Activated CD4-positive, alpha-beta memory T cell treated with anti-CD3 and anti-CD28 coated beads for 36 hours (primary cell): ENCODE measurements at regions of chr2 and their contacts with region 1.

Region 1: GRCh38 chr2:70086838-70087701 is at the start of gene PCBP1:
- DNase-seq: peak; percentile 96
- H3K4me3 Mint-ChIP-seq: peak within 1 kb of the TSS; percentile 97
- H3K27ac Mint-ChIP-seq: peak within 1 kb of the TSS; percentile 100
- H3K4me1 Mint-ChIP-seq: peaks cover 49% of the 10 kb centered on the region
- H3K27me3 Mint-ChIP-seq: peaks cover 3% of the 10 kb centered on the region
- total RNA-seq, gene PCBP1: 444 to 449 TPM

Region 2: GRCh38 chr2:69386789-69387734 is 700.0 kb before region 1 on chr2 and contains the start of gene GFPT1:
- CTCF ChIA-PET with region 1: no interaction called
- POLR2A ChIA-PET with region 1: no interaction called
- intact Hi-C with region 1: loop called (anchors 10 kb)
- DNase-seq: peak; percentile 95
- H3K4me3 Mint-ChIP-seq: peak within 1 kb of the TSS; percentile 85
- H3K27ac Mint-ChIP-seq: peak within 1 kb of the TSS; percentile 80
- H3K4me1 Mint-ChIP-seq: peaks cover 39% of the 10 kb centered on the region
- H3K27me3 Mint-ChIP-seq: no peaks in the 10 kb centered on the region
- total RNA-seq, gene GFPT1: 39.8 to 43.6 TPM

Region 3: GRCh38 chr2:70104231-70105111 is 17.4 kb after region 1 on chr2:
- CTCF ChIA-PET with region 1: interaction called, 4 read pairs
- POLR2A ChIA-PET with region 1: interaction called, 24 read pairs
- intact Hi-C with region 1: loop called (anchors 1 kb)
- DNase-seq: peak; percentile 71
- H3K4me3 Mint-ChIP-seq: peak overlapping the region; percentile 70
- H3K27ac Mint-ChIP-seq: peak overlapping the region; percentile 95
- H3K4me1 Mint-ChIP-seq: peaks cover 52% of the 10 kb centered on the region
- H3K27me3 Mint-ChIP-seq: no peaks in the 10 kb centered on the region

Region 4: DNA sequence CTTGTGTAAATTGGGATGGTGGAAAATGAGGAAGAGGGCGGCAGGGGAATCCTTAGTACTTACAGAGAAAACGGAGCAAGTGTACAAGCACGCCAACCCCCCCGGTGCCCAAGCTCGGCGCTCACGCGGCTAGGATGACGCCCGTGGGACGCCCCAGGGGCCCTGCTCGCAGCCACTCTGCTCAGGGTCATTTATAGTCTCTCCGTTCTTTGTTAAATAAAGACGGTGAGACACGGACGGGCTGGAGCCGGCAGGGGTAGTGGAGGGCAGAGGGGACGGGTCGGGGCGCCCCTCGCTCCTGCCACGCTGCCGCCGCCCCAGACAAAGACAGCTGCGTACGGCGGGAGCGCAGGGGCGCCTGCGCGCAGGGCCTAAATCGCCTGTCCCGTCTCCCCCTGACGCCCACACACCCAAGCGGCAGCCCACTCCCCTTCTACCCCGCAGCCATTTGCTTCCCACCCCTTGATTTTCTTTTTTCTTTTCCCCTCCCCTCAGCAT is 38.0 kb after region 1 on chr2:
- CTCF ChIA-PET with region 1: interaction called, 6 read pairs
- POLR2A ChIA-PET with region 1: interaction called, 52 read pairs
- intact Hi-C with region 1: loop called (anchors 1 kb)
- DNase-seq: peak; percentile 67
- H3K4me3 Mint-ChIP-seq: peak overlapping the region; percentile 92
- H3K27ac Mint-ChIP-seq: peak overlapping the region; percentile 98
- H3K4me1 Mint-ChIP-seq: peaks cover 62% of the 10 kb centered on the region
- H3K27me3 Mint-ChIP-seq: no peaks in the 10 kb centered on the region

Region 5: GRCh38 chr2:70132244-70133126 is 45.4 kb after region 1 on chr2:
- CTCF ChIA-PET with region 1: interaction called, 8 read pairs
- POLR2A ChIA-PET with region 1: interaction called, 135 read pairs
- intact Hi-C with region 1: loop called (anchors 1 kb)
- DNase-seq: peak; percentile 53
- H3K4me3 Mint-ChIP-seq: peak overlapping the region; percentile 94
- H3K27ac Mint-ChIP-seq: peak overlapping the region; percentile 100
- H3K4me1 Mint-ChIP-seq: peaks cover 75% of the 10 kb centered on the region
- H3K27me3 Mint-ChIP-seq: no peaks in the 10 kb centered on the region

Region 6: DNA sequence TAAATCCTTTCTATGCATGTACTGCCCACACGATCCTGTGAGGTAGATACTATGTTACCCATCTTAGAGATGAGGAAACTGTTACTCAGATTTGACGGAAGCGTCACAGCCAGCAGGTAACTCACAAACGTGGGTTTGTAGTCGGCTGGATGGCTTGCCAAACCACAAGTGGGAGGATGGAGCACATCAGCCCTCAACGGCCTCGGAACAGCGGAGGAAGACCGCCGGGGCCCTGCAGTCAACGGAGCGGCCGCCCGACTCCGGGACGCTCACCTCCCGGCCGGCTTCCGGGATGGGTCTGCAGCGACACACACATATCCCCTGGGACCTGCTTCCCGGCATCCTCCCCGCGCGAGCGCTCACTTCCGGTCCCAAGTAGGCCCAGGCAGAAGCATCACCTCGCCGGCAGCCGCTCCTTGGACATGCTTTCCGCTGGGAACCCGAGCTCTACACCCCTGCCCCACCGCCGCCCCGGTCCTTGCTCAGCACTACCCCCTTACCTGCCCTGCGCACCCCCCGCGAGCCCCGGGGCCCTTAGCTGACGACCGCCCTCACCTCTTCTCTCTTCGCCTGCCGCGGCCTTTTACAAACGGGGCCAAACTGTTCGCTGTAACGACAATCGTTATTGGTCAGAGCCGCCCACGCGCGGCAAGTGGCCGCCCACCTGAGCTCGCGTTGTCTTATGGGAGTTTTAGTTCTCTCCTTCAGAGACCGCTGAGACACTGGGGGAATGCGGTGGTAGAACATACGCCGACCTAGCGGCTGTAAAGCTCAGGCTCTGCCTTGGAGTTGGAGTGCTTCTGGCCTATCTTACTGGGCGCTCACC is 103.6 kb after region 1 on chr2 and contains the start of gene C2orf42:
- CTCF ChIA-PET with region 1: no interaction called
- POLR2A ChIA-PET with region 1: interaction called, 9 read pairs
- intact Hi-C with region 1: loop called (anchors 1 kb)
- DNase-seq: peak; percentile 98
- H3K4me3 Mint-ChIP-seq: peak within 1 kb of the TSS; percentile 97
- H3K27ac Mint-ChIP-seq: peak within 1 kb of the TSS; percentile 99
- H3K4me1 Mint-ChIP-seq: peaks cover 20% of the 10 kb centered on the region
- H3K27me3 Mint-ChIP-seq: peaks cover 1% of the 10 kb centered on the region
- total RNA-seq, gene C2orf42: 23.5 to 23.9 TPM

Region 7: GRCh38 chr2:70248181-70248847 is 161.2 kb after region 1 on chr2 and contains the start of gene TIA1:
- CTCF ChIA-PET with region 1: no interaction called
- POLR2A ChIA-PET with region 1: no interaction called
- intact Hi-C with region 1: loop called (anchors 2 kb)
- DNase-seq: peak; percentile 99
- H3K4me3 Mint-ChIP-seq: peak within 1 kb of the TSS; percentile 90
- H3K27ac Mint-ChIP-seq: peak within 1 kb of the TSS; percentile 96
- H3K4me1 Mint-ChIP-seq: peaks cover 28% of the 10 kb centered on the region
- H3K27me3 Mint-ChIP-seq: peaks cover 4% of the 10 kb centered on the region
- total RNA-seq, gene TIA1: 82.5 to 98.6 TPM

Region 8: DNA sequence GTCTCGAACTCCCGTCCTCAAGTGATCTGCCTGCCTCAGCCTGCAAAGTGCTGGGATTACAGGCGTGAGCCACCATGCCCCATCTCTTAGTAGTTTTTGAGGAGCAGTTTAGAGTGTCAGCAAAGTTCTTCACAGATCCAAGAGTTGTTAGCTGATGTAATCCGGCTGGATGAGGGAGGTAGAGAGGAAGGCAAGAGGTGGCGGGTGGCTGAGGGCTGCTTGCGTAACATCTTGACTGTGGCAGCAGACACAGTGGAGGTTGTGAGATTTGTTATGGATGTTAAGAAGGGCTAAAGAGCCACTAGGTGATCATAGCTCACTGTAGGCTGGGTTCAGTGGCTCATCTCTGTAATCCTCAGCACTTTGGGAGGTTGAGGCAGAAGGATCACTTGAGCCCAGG is 234.3 kb after region 1 on chr2:
- CTCF ChIA-PET with region 1: no interaction called
- POLR2A ChIA-PET with region 1: no interaction called
- intact Hi-C with region 1: no loop called
- DNase-seq: no peak
- H3K4me3 Mint-ChIP-seq: no peak overlapping the region
- H3K27ac Mint-ChIP-seq: no peak overlapping the region
- H3K4me1 Mint-ChIP-seq: no peaks in the 10 kb centered on the region
- H3K27me3 Mint-ChIP-seq: peaks cover 3% of the 10 kb centered on the region